AG04450 (cell line): ENCODE measurements at regions of chr20 and their contacts with region 1.

Region 1: DNA sequence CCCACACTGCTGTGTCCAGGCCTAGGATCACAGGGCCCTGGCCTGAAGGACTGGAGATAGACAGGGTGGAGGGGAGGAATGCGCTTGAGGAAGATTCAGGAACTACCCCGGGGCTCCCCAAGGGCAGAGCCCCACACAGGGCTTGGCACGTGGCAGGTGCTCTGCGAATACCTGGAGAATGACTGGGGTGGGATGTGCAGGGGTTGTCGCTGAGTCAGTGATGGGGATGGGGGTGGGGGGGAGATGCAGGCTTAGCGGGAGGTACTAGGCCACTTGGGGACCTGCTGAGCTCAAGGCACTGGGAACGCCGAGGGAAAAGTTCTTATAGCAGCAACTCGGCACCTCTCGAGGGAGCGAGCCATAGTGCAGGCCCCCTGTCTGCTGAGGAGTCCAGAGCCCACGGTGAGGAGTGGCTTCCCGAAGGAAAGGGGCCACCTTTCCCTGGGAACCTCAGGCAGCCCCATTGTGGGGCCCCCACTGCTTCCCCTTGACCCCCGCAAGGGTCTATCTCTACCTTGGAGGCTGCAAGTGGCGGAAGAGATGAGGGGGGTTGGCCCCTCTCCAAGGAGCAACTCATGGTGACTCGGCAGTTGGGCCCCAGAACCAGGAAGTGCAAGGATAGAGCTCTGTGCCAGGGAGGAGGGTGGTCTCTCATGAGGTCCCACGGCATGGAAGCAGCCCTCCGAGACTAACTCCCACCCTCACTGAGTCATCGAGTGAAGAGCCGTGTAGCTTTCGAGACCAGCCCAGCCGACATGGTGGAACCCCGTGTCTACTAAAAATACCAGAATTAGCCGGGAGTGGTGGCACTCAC is 33.1 kb downstream of the SRC start:
- DNase-seq: no peak
- H3K4me3 ChIP-seq: no peak overlapping the region
- H3K27ac ChIP-seq: peak overlapping the region; percentile 65
- H3K27me3 ChIP-seq: no peaks in the 10 kb centered on the region
- CTCF ChIP-seq: no peak

Region 2: GRCh38 chr20:37282556-37282955 is 96.4 kb before region 1 on chr20:
- CTCF ChIA-PET with region 1: interaction called, 34 read pairs
- POLR2A ChIA-PET with region 1: interaction called, 5 read pairs
- DNase-seq: no peak
- H3K4me3 ChIP-seq: no peak overlapping the region
- H3K27ac ChIP-seq: peak overlapping the region; percentile 31
- H3K27me3 ChIP-seq: peaks cover 3% of the 10 kb centered on the region
- CTCF ChIP-seq: peak; percentile 71

Region 3: GRCh38 chr20:37345339-37346230 is 33.4 kb before region 1 on chr20 and contains the start of gene SRC:
- CTCF ChIA-PET with region 1: no interaction called
- POLR2A ChIA-PET with region 1: interaction called, 10 read pairs
- DNase-seq: peak; percentile 27
- H3K4me3 ChIP-seq: peak within 1 kb of the TSS; percentile 66
- H3K27ac ChIP-seq: no peak within 1 kb of the TSS
- H3K27me3 ChIP-seq: no peaks in the 10 kb centered on the region
- CTCF ChIP-seq: no peak
- polyA plus RNA-seq, gene SRC: 13.9 and 19.1 TPM in 2 replicates

Region 4: DNA sequence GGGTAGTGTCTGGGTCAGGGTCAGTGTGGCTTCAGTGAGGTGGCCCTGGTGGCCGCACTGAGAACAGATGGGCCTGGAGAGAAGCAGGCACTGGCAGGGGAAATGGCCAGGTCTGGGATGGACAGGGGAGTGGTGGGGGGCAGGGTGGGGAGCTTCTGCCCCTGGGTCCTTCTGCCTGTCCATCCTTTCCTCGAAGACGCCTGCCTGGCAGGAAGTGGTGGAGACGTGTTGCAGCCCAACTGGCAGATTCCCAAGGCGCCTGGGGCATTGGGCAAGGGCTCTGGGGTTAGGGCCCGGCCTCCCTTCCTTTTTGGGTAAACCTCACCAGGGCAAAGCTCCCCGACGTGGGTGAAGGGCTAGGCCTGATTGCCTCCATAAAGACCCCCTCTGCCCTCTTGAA is 22.6 kb before region 1 on chr20:
- CTCF ChIA-PET with region 1: no interaction called
- POLR2A ChIA-PET with region 1: no interaction called
- DNase-seq: no peak
- H3K4me3 ChIP-seq: no peak overlapping the region
- H3K27ac ChIP-seq: no peak overlapping the region
- H3K27me3 ChIP-seq: no peaks in the 10 kb centered on the region
- CTCF ChIP-seq: no peak

Region 5: GRCh38 chr20:37430788-37431460 is 51.9 kb after region 1 on chr20:
- CTCF ChIA-PET with region 1: no interaction called
- POLR2A ChIA-PET with region 1: no interaction called
- DNase-seq: no peak
- H3K4me3 ChIP-seq: no peak overlapping the region
- H3K27ac ChIP-seq: no peak overlapping the region
- H3K27me3 ChIP-seq: peaks cover 44% of the 10 kb centered on the region
- CTCF ChIP-seq: no peak

Region 6: GRCh38 chr20:37640600-37641561 is 261.9 kb after region 1 on chr20:
- CTCF ChIA-PET with region 1: no interaction called
- POLR2A ChIA-PET with region 1: no interaction called
- DNase-seq: no peak
- H3K4me3 ChIP-seq: no peak overlapping the region
- H3K27ac ChIP-seq: no peak overlapping the region
- H3K27me3 ChIP-seq: peaks cover 19% of the 10 kb centered on the region
- CTCF ChIP-seq: no peak